GM12878 (cell line): ENCODE measurements at regions of chr9 and their contacts with region 1.

Region 1: GRCh38 chr9:120477521-120478001 is 102.4 kb downstream of the CDK5RAP2 start:
- DNase-seq: no peak
- ATAC-seq: peak; percentile 80
- H3K4me3 ChIP-seq: no peak overlapping the region
- H3K27ac ChIP-seq: no peak overlapping the region
- H3K4me1 ChIP-seq: no peaks in the 10 kb centered on the region
- H3K27me3 ChIP-seq: no peaks in the 10 kb centered on the region
- CTCF ChIP-seq: peak; percentile 63 to 82 (median 68)
- EP300 ChIP-seq: no peak
- POLR2A ChIP-seq: no peak
- RAD21 ChIP-seq: peak; percentile 63

Region 2: DNA sequence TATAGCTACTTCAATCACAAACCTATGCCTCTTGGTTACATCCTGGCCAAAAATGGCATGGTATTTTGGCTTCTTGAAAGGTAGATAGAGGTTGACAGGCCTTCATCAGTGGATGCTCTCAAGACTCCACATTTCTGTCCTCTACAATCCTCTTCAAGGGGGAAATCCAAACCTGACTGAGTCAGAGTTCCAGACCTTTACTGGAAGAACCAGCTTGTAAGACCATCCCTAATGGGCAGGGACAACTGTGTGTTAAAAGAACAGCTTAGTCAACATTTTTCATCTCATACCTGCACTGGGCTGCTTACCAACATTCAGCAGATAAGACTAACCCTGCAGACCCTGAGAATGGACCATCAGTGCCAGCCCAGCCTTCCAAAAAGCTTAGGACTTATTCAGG is 53.3 kb before region 1 on chr9:
- CTCF ChIA-PET with region 1: no interaction called
- POLR2A ChIA-PET with region 1: no interaction called
- RAD21 ChIA-PET with region 1: no interaction called
- SMC1A ChIA-PET with region 1: no interaction called
- in situ Hi-C with region 1: loop called (anchors 5 kb)
- intact Hi-C with region 1: no loop called
- DNase-seq: no peak
- ATAC-seq: no peak
- H3K4me3 ChIP-seq: no peak overlapping the region
- H3K27ac ChIP-seq: no peak overlapping the region
- H3K4me1 ChIP-seq: no peaks in the 10 kb centered on the region
- H3K27me3 ChIP-seq: no peaks in the 10 kb centered on the region
- CTCF ChIP-seq: no peak
- EP300 ChIP-seq: no peak
- POLR2A ChIP-seq: no peak
- RAD21 ChIP-seq: no peak

Region 3: GRCh38 chr9:120464176-120464886 is 13.2 kb before region 1 on chr9:
- CTCF ChIA-PET with region 1: interaction called, 11 read pairs
- POLR2A ChIA-PET with region 1: no interaction called
- RAD21 ChIA-PET with region 1: no interaction called
- SMC1A ChIA-PET with region 1: no interaction called
- in situ Hi-C with region 1: no loop called
- intact Hi-C with region 1: no loop called
- DNase-seq: no peak
- ATAC-seq: no peak
- H3K4me3 ChIP-seq: no peak overlapping the region
- H3K27ac ChIP-seq: no peak overlapping the region
- H3K4me1 ChIP-seq: no peaks in the 10 kb centered on the region
- H3K27me3 ChIP-seq: no peaks in the 10 kb centered on the region
- CTCF ChIP-seq: no peak
- EP300 ChIP-seq: no peak
- POLR2A ChIP-seq: no peak
- RAD21 ChIP-seq: no peak